SK-N-SH (cell line): ENCODE measurements at regions of chr3 and their contacts with region 1.

Region 1: DNA sequence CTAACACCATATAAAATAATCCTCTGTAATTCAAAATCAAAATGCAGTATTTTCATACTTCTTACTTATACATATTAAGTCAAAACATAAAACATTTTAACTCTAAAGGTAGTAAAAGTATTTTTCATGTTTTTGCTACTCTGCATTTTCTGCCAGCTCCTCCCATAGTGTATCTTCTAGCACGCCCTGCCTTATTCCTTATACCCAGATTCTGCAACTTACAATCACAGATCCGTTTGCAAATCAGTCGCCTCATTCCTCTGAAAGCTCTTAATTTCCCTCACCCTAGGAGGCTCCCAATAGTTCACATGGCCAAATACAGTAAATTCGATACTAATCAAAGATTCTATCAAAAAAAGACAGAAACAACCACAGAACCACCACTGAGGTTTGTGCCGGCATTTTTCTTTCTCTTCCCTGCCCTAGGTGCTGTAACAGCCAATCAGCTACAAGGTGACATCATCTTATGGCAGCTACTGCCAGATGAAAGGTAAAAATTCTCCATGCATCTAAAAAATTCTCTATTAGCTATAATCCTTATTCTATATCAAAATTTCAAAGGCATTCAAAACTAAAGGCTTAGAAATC is 72.9 kb downstream of the CLASP2 start:
- DNase-seq: peak; percentile 58
- H3K4me3 ChIP-seq: peak overlapping the region; percentile 52 to 64
- H3K27ac ChIP-seq: peak overlapping the region; percentile 16 to 77; a peak in 3 of 4 replicates
- H3K4me1 ChIP-seq: peaks cover 2 to 4% of the 10 kb centered on the region in 2 experiments; a peak in 3 of 4 replicates
- H3K27me3 ChIP-seq: no peaks in the 10 kb centered on the region
- CTCF ChIP-seq: no peak
- EP300 ChIP-seq: 0 out of 4 replicates have a peak, but pooled peaks of 1 of the 2 experiments have one; percentile 15
- RAD21 ChIP-seq: no peak

Region 2: GRCh38 chr3:33658991-33659848 is 14.1 kb after region 1 on chr3:
- CTCF ChIA-PET with region 1: interaction called, 11 read pairs
- POLR2A ChIA-PET with region 1: interaction called, 47 read pairs
- DNase-seq: peak; percentile 74
- H3K4me3 ChIP-seq: peak overlapping the region; percentile 51 to 62
- H3K27ac ChIP-seq: peak overlapping the region; percentile 70 to 99
- H3K4me1 ChIP-seq: peaks cover 10 to 26% of the 10 kb centered on the region in 2 experiments; a peak in 3 of 4 replicates
- H3K27me3 ChIP-seq: no peaks in the 10 kb centered on the region
- CTCF ChIP-seq: no peak
- EP300 ChIP-seq: peak in 1 of 2 experiments; percentile 23; a peak in 1 of 4 replicates
- RAD21 ChIP-seq: peak; percentile 10; the same call in 1 of the 2 replicates

Region 3: GRCh38 chr3:33704891-33705290 is 59.7 kb after region 1 on chr3:
- CTCF ChIA-PET with region 1: no interaction called
- POLR2A ChIA-PET with region 1: no interaction called
- DNase-seq: no peak
- H3K4me3 ChIP-seq: no peak overlapping the region
- H3K27ac ChIP-seq: no peak overlapping the region
- H3K4me1 ChIP-seq: no peaks in the 10 kb centered on the region
- H3K27me3 ChIP-seq: no peaks in the 10 kb centered on the region
- CTCF ChIP-seq: no peak
- EP300 ChIP-seq: no peak
- RAD21 ChIP-seq: no peak